AG04449 (cell line): ENCODE measurements at regions of chr15 and their contacts with region 1.

Region 1: GRCh38 chr15:55917881-55918296 is 75.5 kb downstream of the NEDD4 start:
- DNase-seq: peak; percentile 67
- H3K4me3 ChIP-seq: no peak overlapping the region
- CTCF ChIP-seq: peak; percentile 53

Region 2: DNA sequence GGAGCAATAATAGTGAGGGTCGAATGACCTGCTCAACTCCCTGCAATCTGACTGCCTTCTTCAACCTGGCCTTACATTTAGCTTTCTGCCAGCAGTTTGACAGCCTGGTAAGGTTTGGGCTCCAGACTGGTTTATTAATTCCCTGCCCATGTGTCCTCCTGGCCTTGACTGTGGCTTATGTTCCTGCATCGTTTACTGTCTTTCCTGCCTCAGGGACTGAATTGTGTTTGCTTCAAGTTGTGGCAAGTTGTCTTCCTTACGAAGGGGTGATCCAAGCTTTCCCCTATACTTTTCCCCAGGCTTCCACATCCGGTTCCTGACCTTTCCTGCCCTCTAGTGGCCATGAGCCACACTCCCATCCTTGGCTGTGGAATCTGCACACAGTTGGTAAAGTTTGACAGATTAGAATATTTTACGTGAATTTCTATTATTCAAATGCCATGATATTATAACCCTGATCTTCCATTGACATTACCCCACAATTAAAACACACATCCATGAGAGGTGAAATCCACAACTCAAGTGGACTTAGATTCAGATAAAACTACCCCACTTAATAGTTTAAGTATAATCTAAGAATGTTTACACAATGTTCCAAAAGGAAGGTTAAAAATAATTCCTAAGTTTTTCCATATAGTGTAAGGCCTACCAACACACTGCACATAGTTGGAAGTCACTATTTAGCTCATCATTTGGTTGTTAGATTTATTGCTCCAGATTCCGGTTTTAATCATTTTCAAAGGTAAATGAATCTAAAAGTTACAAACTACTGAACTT is 20.1 kb before region 1 on chr15:
- CTCF ChIA-PET with region 1: interaction called, 33 read pairs
- POLR2A ChIA-PET with region 1: interaction called, 3 read pairs
- DNase-seq: no peak
- H3K4me3 ChIP-seq: no peak overlapping the region
- CTCF ChIP-seq: peak; percentile 76

Region 3: DNA sequence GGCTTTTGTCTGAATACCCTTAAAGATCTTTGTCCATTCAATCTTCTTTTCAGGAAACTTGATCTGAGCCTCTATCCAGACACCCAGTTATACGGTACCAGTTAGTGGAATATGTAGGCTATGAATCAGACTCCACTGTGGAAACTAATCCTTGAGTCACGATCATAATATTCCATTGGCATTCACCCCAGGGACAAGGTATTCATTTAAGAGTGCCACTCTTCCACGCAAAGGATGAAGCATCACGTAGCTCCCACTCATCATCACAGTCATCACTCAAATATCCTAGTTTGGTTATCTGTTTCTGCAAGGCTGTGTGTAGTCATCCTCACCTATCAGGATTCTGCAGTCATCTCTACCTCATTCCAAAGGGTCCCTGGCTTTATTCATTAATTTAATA is 10.1 kb before region 1 on chr15:
- CTCF ChIA-PET with region 1: interaction called, 21 read pairs
- POLR2A ChIA-PET with region 1: interaction called, 15 read pairs
- DNase-seq: peak; percentile 96
- H3K4me3 ChIP-seq: no peak overlapping the region; the same call in 1 of the 2 replicates
- CTCF ChIP-seq: no peak

Region 4: GRCh38 chr15:55928955-55929354 is 11.1 kb after region 1 on chr15:
- CTCF ChIA-PET with region 1: interaction called, 21 read pairs
- POLR2A ChIA-PET with region 1: no interaction called
- DNase-seq: no peak
- H3K4me3 ChIP-seq: no peak overlapping the region
- CTCF ChIP-seq: no peak

Region 5: DNA sequence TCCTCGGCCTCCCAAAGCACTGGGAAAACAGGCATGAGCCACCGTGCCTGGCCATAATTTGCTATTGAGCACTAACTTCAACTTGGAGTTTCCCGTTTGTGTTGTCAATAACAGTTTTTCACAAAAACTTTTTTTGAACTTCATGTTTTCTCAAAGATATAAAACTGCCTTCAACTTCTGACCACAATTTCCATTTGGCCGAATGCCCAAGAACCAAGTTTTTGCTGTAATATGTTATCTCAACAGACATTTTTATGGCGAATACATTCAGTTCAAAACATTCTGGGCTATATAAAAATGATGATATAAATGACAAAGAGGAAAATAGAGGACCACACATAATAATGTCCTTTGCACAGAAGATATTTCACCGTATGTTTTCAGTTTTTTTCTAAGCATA is 19.2 kb after region 1 on chr15:
- CTCF ChIA-PET with region 1: interaction called, 13 read pairs
- POLR2A ChIA-PET with region 1: no interaction called
- DNase-seq: no peak
- H3K4me3 ChIP-seq: no peak overlapping the region
- CTCF ChIP-seq: no peak

Region 6: DNA sequence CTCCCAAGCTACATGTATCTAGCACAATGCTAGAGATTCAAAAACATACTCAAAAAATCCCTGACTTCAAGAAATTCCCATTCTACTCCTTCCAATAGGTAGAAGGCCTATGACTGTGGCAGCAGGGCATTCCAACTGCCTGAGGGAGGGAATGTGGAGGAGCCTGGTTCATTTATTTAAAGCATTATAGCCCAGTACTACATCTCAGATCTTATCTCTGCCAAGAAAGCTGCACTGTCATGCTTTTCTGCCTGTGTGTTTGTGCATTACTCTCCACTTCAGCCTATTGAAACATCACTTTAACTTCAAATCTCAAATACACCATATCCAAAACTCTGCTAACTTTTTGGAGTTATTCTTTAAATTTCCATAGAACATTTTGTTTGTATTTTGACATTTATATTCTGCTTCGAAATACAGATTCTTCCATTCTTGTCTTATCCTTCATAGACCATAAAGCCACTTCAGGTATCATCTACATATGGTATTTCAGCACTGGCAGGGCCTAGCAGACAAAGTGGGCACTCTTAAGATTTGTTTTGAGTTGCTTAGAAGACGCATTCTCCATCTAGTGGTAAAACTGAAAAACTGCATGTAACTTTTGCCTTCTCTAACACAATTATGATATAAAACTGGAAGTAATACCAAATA is 134.6 kb after region 1 on chr15:
- CTCF ChIA-PET with region 1: interaction called, 13 read pairs
- POLR2A ChIA-PET with region 1: no interaction called
- DNase-seq: no peak
- H3K4me3 ChIP-seq: no peak overlapping the region
- CTCF ChIP-seq: peak; percentile 55

Region 7: DNA sequence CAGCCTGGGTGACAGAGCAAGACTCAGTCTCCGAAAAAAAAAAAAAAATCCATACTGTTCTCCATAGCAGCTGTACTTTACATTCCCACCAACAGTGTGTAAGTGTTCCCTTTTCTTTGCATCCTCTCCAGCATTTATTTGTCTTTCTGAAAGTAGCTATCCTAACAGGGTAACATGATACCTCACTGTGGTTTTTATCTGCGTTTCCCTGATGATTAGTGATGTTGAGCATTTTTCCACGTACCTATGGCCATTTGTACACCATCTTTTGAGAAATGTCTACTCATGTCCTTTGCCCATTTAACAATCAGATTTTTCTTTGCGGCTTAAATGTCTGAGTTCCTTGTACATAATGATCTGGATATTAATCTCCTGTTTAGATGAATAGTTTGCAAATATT is 206.5 kb after region 1 on chr15:
- CTCF ChIA-PET with region 1: no interaction called
- POLR2A ChIA-PET with region 1: no interaction called
- DNase-seq: no peak
- H3K4me3 ChIP-seq: no peak overlapping the region
- CTCF ChIP-seq: no peak